ENCODE measurements at regions of chr12 and their contacts with region 1.

Region 1: GRCh38 chr12:52023182-52023975 is 16.6 kb downstream of the TAMALIN start:
- DNase-seq: peak; percentile 96
- ATAC-seq: peak; percentile 69
- H3K4me3 Mint-ChIP-seq: peak overlapping the region; percentile 76
- H3K27ac Mint-ChIP-seq: peak overlapping the region; percentile 96
- H3K4me1 Mint-ChIP-seq: peaks cover 41% of the 10 kb centered on the region
- H3K27me3 Mint-ChIP-seq: peaks cover 1% of the 10 kb centered on the region
- CTCF ChIP-seq: peak; percentile 96

Region 2: GRCh38 chr12:51923501-51924271 is 99.7 kb before region 1 on chr12:
- CTCF ChIA-PET with region 1: interaction called, 21 read pairs
- POLR2A ChIA-PET with region 1: no interaction called
- intact Hi-C with region 1: no loop called
- DNase-seq: peak; percentile 73
- ATAC-seq: peak; percentile 89
- H3K4me3 Mint-ChIP-seq: no peak overlapping the region
- H3K27ac Mint-ChIP-seq: no peak overlapping the region
- H3K4me1 Mint-ChIP-seq: peaks cover 6% of the 10 kb centered on the region
- H3K27me3 Mint-ChIP-seq: no peaks in the 10 kb centered on the region
- CTCF ChIP-seq: peak; percentile 91

Region 3: GRCh38 chr12:51970904-51971646 is 52.3 kb before region 1 on chr12:
- CTCF ChIA-PET with region 1: interaction called, 14 read pairs
- POLR2A ChIA-PET with region 1: interaction called, 6 read pairs
- intact Hi-C with region 1: no loop called
- DNase-seq: peak; percentile 75
- ATAC-seq: peak; percentile 83
- H3K4me3 Mint-ChIP-seq: peak overlapping the region; percentile 29
- H3K27ac Mint-ChIP-seq: peak overlapping the region; percentile 62
- H3K4me1 Mint-ChIP-seq: peaks cover 61% of the 10 kb centered on the region
- H3K27me3 Mint-ChIP-seq: no peaks in the 10 kb centered on the region
- CTCF ChIP-seq: peak; percentile 87

Region 4: DNA sequence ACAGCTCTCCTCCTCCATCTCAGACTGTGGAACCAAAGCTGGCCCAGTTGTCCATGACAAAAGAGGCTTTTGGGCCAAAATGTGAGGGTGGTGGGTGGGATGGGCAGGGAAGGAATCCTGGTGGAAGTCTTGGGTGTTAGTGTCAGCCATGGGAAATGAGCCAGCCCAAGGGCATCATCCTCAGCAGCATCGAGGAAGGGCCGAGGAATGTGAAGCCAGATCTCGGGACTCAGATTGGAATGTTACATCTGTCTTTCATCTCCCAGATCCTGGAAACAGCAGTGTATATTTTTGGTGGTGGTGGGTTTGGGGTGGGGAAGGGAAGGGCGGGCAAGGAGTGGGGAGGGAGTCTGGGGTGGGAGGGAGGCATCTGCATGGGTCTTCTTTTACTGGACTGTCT is 28.4 kb before region 1 on chr12:
- CTCF ChIA-PET with region 1: interaction called, 411 read pairs
- POLR2A ChIA-PET with region 1: interaction called, 5 read pairs
- intact Hi-C with region 1: loop called (anchors 2 kb)
- DNase-seq: no peak
- ATAC-seq: no peak
- H3K4me3 Mint-ChIP-seq: no peak overlapping the region
- H3K27ac Mint-ChIP-seq: no peak overlapping the region
- H3K4me1 Mint-ChIP-seq: peaks cover 12% of the 10 kb centered on the region
- H3K27me3 Mint-ChIP-seq: no peaks in the 10 kb centered on the region
- CTCF ChIP-seq: no peak

Region 5: DNA sequence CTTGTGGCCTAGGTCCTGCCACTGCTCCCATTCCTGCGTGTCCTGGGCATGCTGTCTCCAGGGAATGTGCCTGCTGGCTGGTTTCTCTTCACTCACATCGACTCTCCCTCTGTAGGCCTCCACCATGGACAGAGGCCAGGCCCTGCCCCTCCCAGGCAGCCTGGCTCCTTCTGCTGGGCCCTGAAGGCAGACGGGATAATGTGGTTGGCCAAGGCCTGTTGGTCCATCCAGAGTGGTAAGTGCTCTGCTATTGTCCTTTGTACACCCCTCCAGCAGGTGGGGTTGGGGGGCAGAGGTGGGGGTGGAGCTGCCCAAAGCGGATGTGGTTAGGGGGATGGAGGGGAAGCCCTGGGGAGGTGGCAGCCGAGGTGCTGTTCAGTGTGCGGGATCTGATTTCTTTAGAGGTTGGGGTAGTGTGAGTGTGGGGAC is 18.3 kb after region 1 on chr12:
- CTCF ChIA-PET with region 1: interaction called, 310 read pairs
- POLR2A ChIA-PET with region 1: interaction called, 12 read pairs
- intact Hi-C with region 1: no loop called
- DNase-seq: peak; percentile 76
- ATAC-seq: peak; percentile 73
- H3K4me3 Mint-ChIP-seq: peak overlapping the region; percentile 74
- H3K27ac Mint-ChIP-seq: peak overlapping the region; percentile 91
- H3K4me1 Mint-ChIP-seq: peaks cover 58% of the 10 kb centered on the region
- H3K27me3 Mint-ChIP-seq: no peaks in the 10 kb centered on the region
- CTCF ChIP-seq: peak; percentile 37

Region 6: GRCh38 chr12:52082988-52083637 is 59.7 kb after region 1 on chr12:
- CTCF ChIA-PET with region 1: interaction called, 394 read pairs
- POLR2A ChIA-PET with region 1: interaction called, 11 read pairs
- intact Hi-C with region 1: loop called (anchors 1 kb)
- DNase-seq: peak; percentile 73
- ATAC-seq: peak; percentile 92
- H3K4me3 Mint-ChIP-seq: no peak overlapping the region
- H3K27ac Mint-ChIP-seq: no peak overlapping the region
- H3K4me1 Mint-ChIP-seq: peaks cover 9% of the 10 kb centered on the region
- H3K27me3 Mint-ChIP-seq: peaks cover 8% of the 10 kb centered on the region
- CTCF ChIP-seq: peak; percentile 97